PC-9 (cell line): ENCODE measurements at regions of chr1 and their contacts with region 1.

Region 1: DNA sequence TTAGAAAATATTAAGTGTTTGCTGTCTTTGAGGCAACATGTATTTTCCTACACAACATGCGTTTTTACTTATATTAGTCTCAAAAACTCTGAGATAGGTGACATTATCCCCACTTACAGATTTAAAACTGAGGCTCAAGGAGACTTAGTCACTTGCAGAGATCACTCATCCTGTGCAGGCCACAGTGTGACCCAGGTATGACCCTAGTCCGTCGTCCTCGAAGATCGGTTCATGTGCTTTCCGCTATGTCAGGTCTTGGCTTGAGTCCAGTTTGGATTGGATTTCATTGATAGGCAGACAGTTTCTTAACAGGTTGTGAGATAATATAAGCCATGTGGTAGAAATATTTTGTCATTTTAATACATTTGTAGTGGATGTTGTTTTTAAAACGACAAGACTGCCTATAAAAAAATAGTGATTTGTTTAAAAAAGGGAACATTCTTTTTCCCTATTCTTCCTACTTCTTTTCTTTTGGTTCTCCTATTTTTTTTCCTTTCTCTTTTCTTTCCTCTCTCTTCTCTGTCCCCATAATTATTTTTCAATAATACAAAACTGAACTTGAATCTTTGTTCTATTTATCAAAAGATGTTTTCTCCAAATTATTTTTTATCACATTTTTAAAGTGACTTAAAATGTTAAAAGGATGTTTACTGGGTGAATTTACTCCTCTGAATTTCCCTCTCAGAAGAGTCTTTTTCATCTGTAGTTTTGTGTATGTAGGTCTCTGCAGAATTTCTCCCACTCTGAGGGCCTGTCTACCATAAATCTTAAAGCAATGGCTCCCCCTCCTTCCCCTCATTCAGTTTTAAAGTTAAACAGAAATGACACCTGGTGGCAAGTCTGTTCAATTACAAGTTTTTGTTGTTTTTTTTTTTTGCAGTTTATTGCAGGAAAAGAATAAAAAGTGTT is 81.8 kb downstream of the PHTF1 start:
- DNase-seq: peak in 1 of 2 experiments; percentile 59
- H3K4me3 ChIP-seq: no peak overlapping the region
- H3K27ac ChIP-seq: no peak overlapping the region
- H3K4me1 ChIP-seq: peaks cover 17% of the 10 kb centered on the region
- H3K27me3 ChIP-seq: no peaks in the 10 kb centered on the region
- CTCF ChIP-seq: peak; percentile 97

Region 2: DNA sequence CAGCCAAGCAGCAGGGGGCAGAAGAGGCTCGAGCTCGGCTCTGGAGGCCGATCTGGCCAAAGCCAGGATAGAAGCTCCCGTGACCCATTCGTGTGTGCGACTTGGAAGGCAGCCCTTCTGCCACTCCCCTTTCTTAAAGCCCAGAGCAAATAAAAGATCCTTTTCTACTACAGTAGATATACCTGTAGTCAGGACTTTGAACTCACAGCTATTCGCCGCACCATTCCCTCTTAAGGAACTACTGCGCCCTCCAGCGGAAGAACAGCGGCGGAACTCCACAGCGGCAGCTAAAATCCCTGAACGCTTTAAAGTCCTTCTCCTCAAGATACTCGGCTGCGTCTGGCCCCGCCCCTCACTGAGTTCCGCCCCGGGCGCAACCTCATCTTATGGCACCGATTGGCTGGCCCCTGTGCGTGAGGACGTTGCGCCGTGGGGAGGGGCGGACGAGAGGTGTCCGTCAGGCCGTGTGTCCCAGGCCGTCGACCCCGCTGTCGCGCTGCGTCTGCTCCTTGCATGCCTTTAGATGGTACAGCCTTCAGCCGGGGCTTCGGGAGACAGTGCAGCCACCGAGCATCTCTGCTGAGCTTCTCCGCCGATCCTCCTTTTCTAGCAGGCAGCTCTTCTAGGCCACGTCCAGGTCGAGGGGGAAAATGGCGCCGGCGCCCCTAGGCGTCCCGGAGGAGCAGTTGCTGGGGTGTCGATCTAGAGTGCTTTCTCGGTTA is 604.6 kb before region 1 on chr1 and contains the start of gene LRIG2:
- CTCF ChIA-PET with region 1: no interaction called
- POLR2A ChIA-PET with region 1: interaction called, 8 read pairs
- intact Hi-C with region 1: loop called (anchors 2 kb)
- DNase-seq: peak; percentile 99
- H3K4me3 ChIP-seq: peak within 1 kb of the TSS; percentile 85
- H3K27ac ChIP-seq: peak within 1 kb of the TSS; percentile 78
- H3K4me1 ChIP-seq: peaks cover 20% of the 10 kb centered on the region
- H3K27me3 ChIP-seq: no peaks in the 10 kb centered on the region
- CTCF ChIP-seq: peak; percentile 94
- total RNA-seq, gene LRIG2: 9.4 and 10.6 TPM in 2 replicates

Region 3: DNA sequence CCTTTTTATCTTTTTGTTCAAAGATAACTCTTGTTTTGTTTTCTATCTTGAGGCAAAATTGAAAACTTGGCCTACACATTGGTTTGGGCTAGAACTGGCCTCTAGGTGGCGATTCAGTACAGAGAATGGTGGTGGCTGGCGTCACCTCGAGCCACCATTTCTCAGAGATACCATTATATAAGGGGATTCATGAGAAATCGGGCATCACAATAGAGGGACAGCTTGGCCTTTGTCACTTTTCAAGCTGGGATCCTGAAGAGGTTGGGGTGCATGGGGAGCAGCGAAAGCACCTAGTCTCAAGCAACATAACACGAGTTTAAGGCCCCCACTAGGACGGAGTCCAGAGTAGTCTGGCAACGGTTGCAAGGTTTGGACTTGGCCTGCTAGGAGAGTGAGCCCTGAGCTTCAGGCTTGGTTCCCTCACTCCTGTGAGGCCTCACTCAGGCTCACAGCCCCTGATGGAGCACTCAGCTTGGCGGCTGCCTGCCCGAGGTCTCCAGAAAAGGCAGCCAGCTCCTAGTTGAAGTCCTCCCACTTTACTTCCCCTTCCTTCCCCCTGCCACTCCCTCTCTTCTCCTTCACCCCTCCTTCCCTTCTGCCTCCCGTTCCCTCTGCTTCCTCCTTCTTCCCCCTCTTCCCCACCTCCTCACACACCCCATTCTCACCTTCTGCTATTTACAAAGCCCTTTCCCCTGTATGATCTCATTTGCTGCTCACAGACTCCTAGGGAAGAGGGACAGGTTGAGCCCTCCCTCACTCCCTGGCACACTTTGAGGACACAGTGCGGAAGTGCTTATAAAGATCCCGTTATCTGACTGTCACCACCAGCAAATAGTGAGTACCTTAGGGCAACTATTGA is 536.7 kb before region 1 on chr1:
- CTCF ChIA-PET with region 1: interaction called, 7 read pairs
- POLR2A ChIA-PET with region 1: no interaction called
- intact Hi-C with region 1: loop called (anchors 1 kb)
- DNase-seq: peak; percentile 58 to 61
- H3K4me3 ChIP-seq: no peak overlapping the region
- H3K27ac ChIP-seq: peak overlapping the region; percentile 31; the same call in 1 of the 2 replicates
- H3K4me1 ChIP-seq: peaks cover 16% of the 10 kb centered on the region
- H3K27me3 ChIP-seq: no peaks in the 10 kb centered on the region
- CTCF ChIP-seq: peak; percentile 99

Region 4: DNA sequence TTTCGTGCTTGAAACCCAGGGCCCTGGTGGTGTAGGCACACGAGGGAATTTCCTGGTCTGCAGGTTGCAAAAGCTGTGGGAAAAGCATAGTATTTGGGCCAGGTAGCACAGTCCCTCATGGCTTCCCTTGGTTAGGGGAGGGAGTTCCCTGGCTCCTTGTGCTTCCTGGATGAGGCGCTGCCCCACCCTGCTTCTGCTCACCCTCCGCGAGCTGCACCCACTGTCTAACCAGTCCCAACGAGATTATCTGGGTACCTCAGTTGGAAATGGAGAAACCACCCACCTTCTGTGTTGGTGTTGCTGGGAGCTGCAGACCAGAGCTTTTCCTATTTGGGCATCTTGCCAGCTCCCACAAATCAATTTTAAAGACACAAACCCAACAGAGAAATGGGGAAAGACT is 101.2 kb before region 1 on chr1:
- CTCF ChIA-PET with region 1: no interaction called
- POLR2A ChIA-PET with region 1: no interaction called
- intact Hi-C with region 1: no loop called
- DNase-seq: no peak
- H3K4me3 ChIP-seq: no peak overlapping the region
- H3K27ac ChIP-seq: no peak overlapping the region
- H3K4me1 ChIP-seq: peaks cover 9% of the 10 kb centered on the region; the same call in 1 of the 2 replicates
- H3K27me3 ChIP-seq: no peaks in the 10 kb centered on the region
- CTCF ChIP-seq: no peak

Region 5: DNA sequence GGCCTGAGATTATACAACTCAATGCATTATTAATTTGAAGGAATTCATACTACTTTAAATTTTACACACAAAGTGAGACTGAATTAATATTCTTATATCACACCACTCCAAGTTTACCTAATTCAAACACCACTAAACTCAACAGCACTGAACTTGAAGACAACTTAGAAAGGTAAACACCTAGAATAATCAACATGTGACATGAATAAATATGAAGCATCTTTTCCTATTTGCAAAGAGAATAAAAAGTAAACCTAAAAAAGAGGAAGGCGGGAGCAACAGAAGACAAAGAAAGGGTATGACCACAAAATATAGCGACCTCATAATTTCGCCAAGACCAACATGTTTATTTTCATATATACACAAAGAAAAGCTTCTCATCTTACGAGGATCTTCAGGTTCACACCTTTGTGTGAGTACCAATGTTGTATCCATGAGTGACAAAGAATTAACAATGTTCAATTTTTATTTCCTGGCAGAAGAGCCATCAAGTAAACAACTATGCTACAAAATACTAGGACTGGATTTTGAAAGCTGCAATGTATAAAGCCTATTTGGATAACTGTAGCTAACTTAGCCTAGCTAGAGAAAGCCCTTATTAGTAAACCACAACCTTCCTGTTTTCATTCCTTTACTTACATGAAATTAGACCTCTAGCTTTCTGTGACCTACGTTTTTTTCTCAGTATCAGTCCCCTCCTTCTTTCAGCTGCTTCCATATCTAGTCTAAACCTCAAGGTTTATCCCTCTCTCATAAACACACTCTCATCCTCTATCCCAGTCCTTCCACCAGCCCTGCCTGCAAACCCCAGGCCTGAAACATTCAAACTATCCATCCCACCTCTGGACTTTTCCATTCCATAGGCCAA is 103.0 kb after region 1 on chr1:
- CTCF ChIA-PET with region 1: no interaction called
- POLR2A ChIA-PET with region 1: interaction called, 10 read pairs
- intact Hi-C with region 1: no loop called
- DNase-seq: no peak
- H3K4me3 ChIP-seq: no peak overlapping the region
- H3K27ac ChIP-seq: no peak overlapping the region
- H3K4me1 ChIP-seq: peaks cover 10% of the 10 kb centered on the region; the same call in 1 of the 2 replicates
- H3K27me3 ChIP-seq: no peaks in the 10 kb centered on the region
- CTCF ChIP-seq: no peak